ENCODE measurements at regions of chr9 and their contacts with region 1.

Region 1: DNA sequence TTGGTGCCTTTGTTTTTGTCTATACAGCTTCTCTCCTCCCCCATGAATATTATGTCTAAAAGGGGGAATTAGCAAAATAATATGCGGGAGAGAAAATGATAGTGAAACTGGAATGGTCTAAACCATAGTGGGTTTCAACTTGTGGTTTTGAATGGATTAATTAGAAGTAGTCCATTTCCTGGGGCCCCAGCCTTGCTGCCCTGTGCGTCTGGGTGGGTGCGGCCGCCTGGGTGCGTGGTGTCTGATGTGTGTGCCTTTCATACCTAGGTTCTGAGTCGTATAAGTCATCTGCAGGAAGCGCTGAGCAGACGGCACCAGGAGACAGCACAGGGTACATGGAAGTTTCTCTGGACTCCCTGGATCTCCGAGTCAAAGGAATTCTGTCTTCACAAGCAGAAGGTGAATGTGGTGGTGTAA is 120.0 kb upstream of the CACNA1B start:
- ATAC-seq: peak in 3 of 8 experiments; percentile 54 to 90 (median 88)
- H3K4me3 ChIP-seq: no peak overlapping the region
- H3K27ac ChIP-seq: no peak overlapping the region
- H3K4me1 ChIP-seq: peaks cover 8 to 9% of the 10 kb centered on the region in 2 donors

Region 2: GRCh38 chr9:137705443-137706293 is 52.0 kb before region 1 on chr9:
- in situ Hi-C with region 1: loop called in 1 of 9 experiments (anchors 10 kb)
- ATAC-seq: no peak
- H3K4me3 ChIP-seq: no peak overlapping the region
- H3K27ac ChIP-seq: no peak overlapping the region
- H3K4me1 ChIP-seq: no peaks in the 10 kb centered on the region

Region 3: DNA sequence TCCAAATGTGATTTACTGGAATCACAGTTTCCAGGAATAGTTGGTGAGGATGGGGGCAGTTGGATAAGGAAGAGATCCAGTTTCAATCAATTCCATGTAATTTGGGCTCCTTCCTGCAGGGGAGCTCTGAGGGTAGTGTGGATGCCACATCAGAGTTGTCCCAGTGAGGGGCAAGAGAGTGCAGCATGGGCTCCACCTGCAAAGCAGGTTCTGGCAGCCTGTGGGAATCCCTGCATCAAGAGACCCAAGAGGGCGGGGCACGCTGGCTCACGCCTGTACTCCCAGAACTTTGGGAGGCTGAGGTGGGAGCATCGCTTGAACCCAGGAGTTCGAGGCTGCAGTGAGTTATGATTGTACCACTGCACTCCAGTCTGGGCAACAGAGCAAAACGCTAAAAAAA is 308.4 kb after region 1 on chr9:
- in situ Hi-C with region 1: no loop called
- ATAC-seq: peak in 1 of 8 experiments; percentile 36
- H3K4me3 ChIP-seq: no peak overlapping the region
- H3K27ac ChIP-seq: no peak overlapping the region
- H3K4me1 ChIP-seq: peaks cover 7 to 16% of the 10 kb centered on the region in 2 donors

Measured in motor neuron (in vitro differentiated cells).